Breast epithelium (tissue), 4 donors: ENCODE measurements at regions of chr11 and their contacts with region 1.

Region 1: DNA sequence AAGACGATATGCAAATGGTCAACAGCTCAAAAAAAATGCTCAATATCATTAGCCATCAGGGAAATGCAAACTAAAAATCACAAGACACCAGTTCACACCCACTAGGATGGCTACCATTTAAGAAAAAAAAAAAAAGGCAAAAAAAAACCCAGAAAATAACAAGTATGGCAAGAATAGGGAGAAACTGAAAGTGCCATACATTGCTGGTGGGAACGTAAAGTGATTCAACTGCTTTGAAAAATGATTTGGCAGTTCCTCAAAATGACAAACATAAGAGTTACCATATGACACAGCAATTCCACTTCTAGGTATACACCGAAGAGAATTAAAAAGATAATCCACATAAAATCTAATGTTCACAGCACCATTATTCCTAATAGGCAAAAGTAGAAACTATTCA is 47.5 kb downstream of the PICALM start:
- DNase-seq: no peak
- H3K4me3 ChIP-seq: no peak overlapping the region
- H3K27ac ChIP-seq: no peak overlapping the region
- H3K4me1 ChIP-seq: no peaks in the 10 kb centered on the region
- H3K27me3 ChIP-seq: no peaks in the 10 kb centered on the region
- CTCF ChIP-seq: no peak
- POLR2A ChIP-seq: no peak

Region 2: GRCh38 chr11:84720706-84721402 is 1300.5 kb before region 1 on chr11:
- intact Hi-C with region 1: no loop called
- DNase-seq: no peak
- H3K4me3 ChIP-seq: peak overlapping the region; percentile 53 to 73 (median 56)
- H3K27ac ChIP-seq: peak overlapping the region in 1 of 2 donors; percentile 27
- H3K4me1 ChIP-seq: no peaks in the 10 kb centered on the region
- H3K27me3 ChIP-seq: no peaks in the 10 kb centered on the region
- CTCF ChIP-seq: no peak
- POLR2A ChIP-seq: no peak

Region 3: GRCh38 chr11:85672105-85672902 is 349.1 kb before region 1 on chr11:
- intact Hi-C with region 1: no loop called
- DNase-seq: no peak
- H3K4me3 ChIP-seq: no peak overlapping the region
- H3K27ac ChIP-seq: no peak overlapping the region
- H3K4me1 ChIP-seq: no peaks in the 10 kb centered on the region
- H3K27me3 ChIP-seq: no peaks in the 10 kb centered on the region
- CTCF ChIP-seq: no peak
- POLR2A ChIP-seq: no peak

Region 4: DNA sequence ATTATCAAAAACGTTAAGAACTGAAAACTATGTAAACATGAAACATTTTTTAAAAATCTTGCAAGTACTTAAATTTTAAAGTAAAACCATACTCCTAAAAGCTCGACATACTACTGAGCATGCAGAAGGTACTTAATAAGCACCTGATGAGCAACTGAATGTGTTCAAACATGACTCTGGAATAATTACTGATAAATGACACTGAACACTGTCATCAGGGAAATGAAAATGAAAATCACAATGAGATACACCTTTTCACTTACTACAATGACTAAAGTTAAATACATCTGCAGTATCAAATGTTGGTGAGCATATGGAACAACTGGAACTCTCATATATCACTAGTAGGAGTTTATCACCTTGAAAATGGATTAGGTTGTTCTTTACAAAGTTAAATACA is 17.7 kb before region 1 on chr11:
- intact Hi-C with region 1: no loop called
- DNase-seq: no peak
- H3K4me3 ChIP-seq: no peak overlapping the region
- H3K27ac ChIP-seq: no peak overlapping the region
- H3K4me1 ChIP-seq: no peaks in the 10 kb centered on the region
- H3K27me3 ChIP-seq: no peaks in the 10 kb centered on the region
- CTCF ChIP-seq: no peak
- POLR2A ChIP-seq: no peak

Region 5: GRCh38 chr11:86669424-86669823 is 648.0 kb after region 1 on chr11:
- intact Hi-C with region 1: loop called (anchors 5 kb)
- DNase-seq: no peak
- H3K4me3 ChIP-seq: no peak overlapping the region
- H3K27ac ChIP-seq: peak overlapping the region in 1 of 2 donors; percentile 53
- H3K4me1 ChIP-seq: peaks cover 0 to 3% of the 10 kb centered on the region in 2 donors
- H3K27me3 ChIP-seq: no peaks in the 10 kb centered on the region
- CTCF ChIP-seq: no peak
- POLR2A ChIP-seq: no peak

Region 6: GRCh38 chr11:87057749-87058148 is 1036.4 kb after region 1 on chr11:
- intact Hi-C with region 1: no loop called
- DNase-seq: no peak
- H3K4me3 ChIP-seq: no peak overlapping the region
- H3K27ac ChIP-seq: no peak overlapping the region
- H3K4me1 ChIP-seq: no peaks in the 10 kb centered on the region
- H3K27me3 ChIP-seq: no peaks in the 10 kb centered on the region
- CTCF ChIP-seq: no peak
- POLR2A ChIP-seq: no peak